H1 (cell line): ENCODE measurements at regions of chr12 and their contacts with region 1.

Region 1: GRCh38 chr12:47742253-47742825 is 16.3 kb downstream of the RAPGEF3 start:
- DNase-seq: peak in 1 of 2 experiments; percentile 97
- H3K4me3 ChIP-seq: no peak overlapping the region
- H3K27ac ChIP-seq: no peak overlapping the region
- H3K4me1 ChIP-seq: peaks cover 0 to 10% (median 2%) of the 10 kb centered on the region in 4 experiments; a peak in 4 of 7 replicates
- H3K27me3 ChIP-seq: no peaks in the 10 kb centered on the region
- CTCF ChIP-seq: peak in 2 of 3 experiments; percentile 93 to 98; a peak in 3 of 4 replicates
- EP300 ChIP-seq: no peak
- POLR2A ChIP-seq: no peak
- RAD21 ChIP-seq: peak; percentile 91 to 93

Region 2: GRCh38 chr12:47758834-47759690 is 16.7 kb after region 1 on chr12 and contains the start of gene RAPGEF3:
- CTCF ChIA-PET with region 1: interaction called, 892 read pairs
- POLR2A ChIA-PET with region 1: interaction called, 15 read pairs
- DNase-seq: peak in 1 of 2 experiments; percentile 81
- H3K4me3 ChIP-seq: peak within 1 kb of the TSS; percentile 32 to 72 (median 45)
- H3K27ac ChIP-seq: no peak within 1 kb of the TSS
- H3K4me1 ChIP-seq: peaks cover 6 to 15% (median 10%) of the 10 kb centered on the region in 4 experiments; a peak in 6 of 7 replicates
- H3K27me3 ChIP-seq: peaks cover 0 to 2% (median 0%) of the 10 kb centered on the region in 4 experiments; a peak in 2 of 7 replicates
- CTCF ChIP-seq: peak; percentile 46 to 60 (median 49); a peak in 3 of 4 replicates
- EP300 ChIP-seq: peak in 1 of 2 experiments; percentile 33; a peak in 1 of 3 replicates
- POLR2A ChIP-seq: no peak; a peak in 1 of 3 replicates
- RAD21 ChIP-seq: peak; percentile 29 to 35
- total RNA-seq, gene RAPGEF3: 6.7 and 9.4 TPM in 2 replicates

Region 3: GRCh38 chr12:47779301-47779942 is 37.1 kb after region 1 on chr12:
- CTCF ChIA-PET with region 1: interaction called, 2,442 read pairs
- POLR2A ChIA-PET with region 1: interaction called, 79 read pairs
- DNase-seq: peak; percentile 88 to 99
- H3K4me3 ChIP-seq: peak overlapping the region in 3 of 4 experiments; percentile 8 to 42 (median 12); a peak in 3 of 8 replicates
- H3K27ac ChIP-seq: no peak overlapping the region
- H3K4me1 ChIP-seq: peaks cover 0 to 18% (median 11%) of the 10 kb centered on the region in 4 experiments; a peak in 5 of 7 replicates
- H3K27me3 ChIP-seq: peaks cover 0 to 9% (median 5%) of the 10 kb centered on the region in 4 experiments; a peak in 4 of 7 replicates
- CTCF ChIP-seq: peak in 2 of 3 experiments; percentile 96; a peak in 3 of 4 replicates
- EP300 ChIP-seq: no peak; a peak in 1 of 3 replicates
- POLR2A ChIP-seq: peak in 1 of 2 experiments; percentile 15; a peak in 1 of 3 replicates
- RAD21 ChIP-seq: peak; percentile 95 to 97

Region 4: GRCh38 chr12:47803191-47803875 is 61.0 kb after region 1 on chr12:
- CTCF ChIA-PET with region 1: interaction called, 81 read pairs
- POLR2A ChIA-PET with region 1: no interaction called
- DNase-seq: no peak
- H3K4me3 ChIP-seq: no peak overlapping the region
- H3K27ac ChIP-seq: no peak overlapping the region
- H3K4me1 ChIP-seq: peaks cover 0 to 16% (median 9%) of the 10 kb centered on the region in 4 experiments; a peak in 6 of 7 replicates
- H3K27me3 ChIP-seq: no peaks in the 10 kb centered on the region
- CTCF ChIP-seq: no peak
- EP300 ChIP-seq: no peak
- POLR2A ChIP-seq: no peak
- RAD21 ChIP-seq: no peak

Region 5: DNA sequence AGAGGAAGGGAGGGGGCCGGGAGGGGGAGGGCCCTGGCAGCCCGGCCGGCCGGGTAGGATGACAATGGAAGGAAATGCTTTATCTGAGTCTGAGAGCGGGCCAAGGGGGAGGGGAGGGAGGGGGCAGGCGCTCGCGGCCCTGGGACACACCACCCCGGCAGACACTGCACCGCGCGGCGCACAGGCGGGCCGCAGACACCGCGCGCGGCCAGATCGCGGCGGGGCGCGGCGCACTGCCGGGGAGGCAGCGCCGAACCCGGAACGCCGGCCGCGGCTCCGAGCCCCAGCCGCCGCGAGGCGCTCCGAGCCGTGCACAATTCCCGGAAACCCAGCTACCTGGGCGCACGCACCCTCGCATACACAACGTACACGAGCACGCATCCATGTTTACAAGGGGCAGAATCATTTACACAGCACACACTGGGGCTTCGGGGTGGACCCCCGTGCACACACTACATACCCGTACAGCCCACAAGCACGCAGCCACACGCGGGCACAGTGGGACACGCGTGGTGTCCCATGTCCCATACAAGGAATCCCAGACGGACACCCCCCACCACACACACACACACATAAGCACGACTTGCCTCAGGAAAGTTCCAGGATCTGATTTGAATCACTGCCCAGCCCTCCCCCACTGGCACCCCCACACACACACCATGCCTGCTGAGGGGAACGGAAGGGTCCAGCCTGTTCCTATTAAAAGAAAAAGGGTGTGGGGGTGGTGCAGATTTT is 77.7 kb after region 1 on chr12 and contains the start of gene HDAC7:
- CTCF ChIA-PET with region 1: interaction called, 34 read pairs
- POLR2A ChIA-PET with region 1: no interaction called
- DNase-seq: no peak
- H3K4me3 ChIP-seq: peak within 1 kb of the TSS; percentile 65 to 79 (median 66)
- H3K27ac ChIP-seq: peak within 1 kb of the TSS; percentile 93
- H3K4me1 ChIP-seq: peaks cover 5 to 41% (median 35%) of the 10 kb centered on the region in 4 experiments
- H3K27me3 ChIP-seq: no peaks in the 10 kb centered on the region; a peak in 2 of 7 replicates
- CTCF ChIP-seq: no peak
- EP300 ChIP-seq: no peak
- POLR2A ChIP-seq: peak in 1 of 2 experiments; percentile 68; a peak in 2 of 3 replicates
- RAD21 ChIP-seq: no peak
- total RNA-seq, gene HDAC7: 82.0 and 84.9 TPM in 2 replicates